CD4-positive, alpha-beta memory T cell (primary cell): ENCODE measurements at regions of chr3 and their contacts with region 1.

Region 1: GRCh38 chr3:32018757-32019564 is 37.4 kb downstream of the ZNF860 start:
- DNase-seq: peak in 4 of 5 donors; percentile 26 to 40 (median 34)
- H3K4me3 ChIP-seq: no peak overlapping the region
- H3K4me3 Mint-ChIP-seq: no peak overlapping the region
- H3K27ac ChIP-seq: no peak overlapping the region
- H3K27ac Mint-ChIP-seq: no peak overlapping the region
- H3K4me1 ChIP-seq: no peaks in the 10 kb centered on the region
- H3K4me1 Mint-ChIP-seq: no peaks in the 10 kb centered on the region
- H3K27me3 ChIP-seq: no peaks in the 10 kb centered on the region
- H3K27me3 Mint-ChIP-seq: no peaks in the 10 kb centered on the region

Region 2: GRCh38 chr3:31105438-31106077 is 913.4 kb before region 1 on chr3:
- CTCF ChIA-PET with region 1: no interaction called
- POLR2A ChIA-PET with region 1: no interaction called
- intact Hi-C with region 1: no loop called
- DNase-seq: no peak
- H3K4me3 ChIP-seq: no peak overlapping the region
- H3K4me3 Mint-ChIP-seq: no peak overlapping the region
- H3K27ac ChIP-seq: no peak overlapping the region
- H3K27ac Mint-ChIP-seq: no peak overlapping the region
- H3K4me1 ChIP-seq: no peaks in the 10 kb centered on the region
- H3K4me1 Mint-ChIP-seq: peaks cover 0 to 9% (median 5%) of the 10 kb centered on the region in 4 donors
- H3K27me3 ChIP-seq: no peaks in the 10 kb centered on the region
- H3K27me3 Mint-ChIP-seq: no peaks in the 10 kb centered on the region

Region 3: DNA sequence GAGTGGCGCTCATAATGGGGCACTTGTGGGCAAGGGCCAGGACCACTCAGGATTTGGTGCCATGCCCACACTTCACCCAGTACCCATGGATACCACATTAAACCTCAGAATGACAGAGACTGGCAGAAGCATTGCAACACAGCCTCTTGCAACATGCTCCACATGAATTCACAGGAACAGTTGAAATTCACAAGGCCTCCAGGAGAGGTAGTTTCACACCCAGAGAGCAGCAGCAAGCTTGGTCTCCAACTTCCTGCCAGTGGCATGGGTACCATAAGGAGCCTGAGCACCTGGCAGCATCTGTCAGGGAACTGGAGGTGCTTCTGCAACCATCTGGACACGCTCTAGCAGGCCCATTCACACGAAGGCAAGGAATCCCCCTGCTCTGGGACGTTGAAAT is 138.9 kb before region 1 on chr3:
- CTCF ChIA-PET with region 1: no interaction called
- POLR2A ChIA-PET with region 1: no interaction called
- intact Hi-C with region 1: no loop called
- DNase-seq: no peak
- H3K4me3 ChIP-seq: no peak overlapping the region
- H3K4me3 Mint-ChIP-seq: no peak overlapping the region
- H3K27ac ChIP-seq: no peak overlapping the region
- H3K27ac Mint-ChIP-seq: no peak overlapping the region
- H3K4me1 ChIP-seq: no peaks in the 10 kb centered on the region
- H3K4me1 Mint-ChIP-seq: peaks cover 0 to 2% (median 0%) of the 10 kb centered on the region in 4 donors
- H3K27me3 ChIP-seq: no peaks in the 10 kb centered on the region
- H3K27me3 Mint-ChIP-seq: peaks cover 0 to 2% of the 10 kb centered on the region in 2 donors

Region 4: GRCh38 chr3:32120471-32120870 is 101.5 kb after region 1 on chr3:
- CTCF ChIA-PET with region 1: interaction called, 13 read pairs
- POLR2A ChIA-PET with region 1: no interaction called
- intact Hi-C with region 1: no loop called
- DNase-seq: no peak
- H3K4me3 ChIP-seq: no peak overlapping the region
- H3K4me3 Mint-ChIP-seq: no peak overlapping the region
- H3K27ac ChIP-seq: no peak overlapping the region
- H3K27ac Mint-ChIP-seq: no peak overlapping the region
- H3K4me1 ChIP-seq: peaks cover 38% of the 10 kb centered on the region
- H3K4me1 Mint-ChIP-seq: peaks cover 34 to 58% (median 43%) of the 10 kb centered on the region in 4 donors
- H3K27me3 ChIP-seq: no peaks in the 10 kb centered on the region
- H3K27me3 Mint-ChIP-seq: no peaks in the 10 kb centered on the region

Region 5: GRCh38 chr3:32132706-32133105 is 113.7 kb after region 1 on chr3:
- CTCF ChIA-PET with region 1: interaction called, 26 read pairs
- POLR2A ChIA-PET with region 1: no interaction called
- intact Hi-C with region 1: no loop called
- DNase-seq: no peak
- H3K4me3 ChIP-seq: no peak overlapping the region
- H3K4me3 Mint-ChIP-seq: no peak overlapping the region
- H3K27ac ChIP-seq: no peak overlapping the region
- H3K27ac Mint-ChIP-seq: no peak overlapping the region
- H3K4me1 ChIP-seq: peaks cover 6% of the 10 kb centered on the region
- H3K4me1 Mint-ChIP-seq: peaks cover 6 to 29% (median 12%) of the 10 kb centered on the region in 4 donors
- H3K27me3 ChIP-seq: no peaks in the 10 kb centered on the region
- H3K27me3 Mint-ChIP-seq: no peaks in the 10 kb centered on the region

Region 6: DNA sequence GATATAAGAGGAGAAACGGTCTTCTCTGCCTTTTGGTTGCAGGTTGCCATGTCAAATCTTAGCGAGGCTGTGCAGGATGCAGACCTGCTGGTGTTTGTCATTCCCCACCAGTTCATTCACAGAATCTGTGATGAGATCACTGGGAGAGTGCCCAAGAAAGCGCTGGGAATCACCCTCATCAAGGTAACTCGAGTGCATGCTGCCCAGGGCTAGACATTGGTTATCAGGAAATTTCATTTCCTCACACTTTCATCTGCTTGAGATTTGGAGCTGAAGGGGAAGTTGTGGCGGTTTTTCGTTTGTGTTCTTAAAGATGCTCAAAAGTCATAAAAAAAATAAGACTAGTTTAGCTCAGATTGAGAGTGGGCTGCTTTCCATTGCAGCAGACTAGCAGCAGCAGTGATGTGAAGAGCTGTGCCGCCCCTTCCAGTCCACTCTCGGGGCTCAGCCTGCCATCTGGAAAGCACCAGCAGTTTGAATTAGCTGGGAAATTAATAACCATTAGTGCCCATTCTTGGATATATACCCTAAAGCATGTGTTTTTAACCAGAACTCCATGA is 119.7 kb after region 1 on chr3:
- CTCF ChIA-PET with region 1: interaction called, 134 read pairs
- POLR2A ChIA-PET with region 1: interaction called, 5 read pairs
- intact Hi-C with region 1: no loop called
- DNase-seq: no peak
- H3K4me3 ChIP-seq: no peak overlapping the region
- H3K4me3 Mint-ChIP-seq: peak overlapping the region in 4 of 8 donors; percentile 22 to 59 (median 46)
- H3K27ac ChIP-seq: no peak overlapping the region
- H3K27ac Mint-ChIP-seq: peak overlapping the region in 4 of 7 donors; percentile 3 to 45 (median 6)
- H3K4me1 ChIP-seq: peaks cover 19% of the 10 kb centered on the region
- H3K4me1 Mint-ChIP-seq: peaks cover 19 to 36% (median 26%) of the 10 kb centered on the region in 4 donors
- H3K27me3 ChIP-seq: no peaks in the 10 kb centered on the region
- H3K27me3 Mint-ChIP-seq: no peaks in the 10 kb centered on the region

Region 7: DNA sequence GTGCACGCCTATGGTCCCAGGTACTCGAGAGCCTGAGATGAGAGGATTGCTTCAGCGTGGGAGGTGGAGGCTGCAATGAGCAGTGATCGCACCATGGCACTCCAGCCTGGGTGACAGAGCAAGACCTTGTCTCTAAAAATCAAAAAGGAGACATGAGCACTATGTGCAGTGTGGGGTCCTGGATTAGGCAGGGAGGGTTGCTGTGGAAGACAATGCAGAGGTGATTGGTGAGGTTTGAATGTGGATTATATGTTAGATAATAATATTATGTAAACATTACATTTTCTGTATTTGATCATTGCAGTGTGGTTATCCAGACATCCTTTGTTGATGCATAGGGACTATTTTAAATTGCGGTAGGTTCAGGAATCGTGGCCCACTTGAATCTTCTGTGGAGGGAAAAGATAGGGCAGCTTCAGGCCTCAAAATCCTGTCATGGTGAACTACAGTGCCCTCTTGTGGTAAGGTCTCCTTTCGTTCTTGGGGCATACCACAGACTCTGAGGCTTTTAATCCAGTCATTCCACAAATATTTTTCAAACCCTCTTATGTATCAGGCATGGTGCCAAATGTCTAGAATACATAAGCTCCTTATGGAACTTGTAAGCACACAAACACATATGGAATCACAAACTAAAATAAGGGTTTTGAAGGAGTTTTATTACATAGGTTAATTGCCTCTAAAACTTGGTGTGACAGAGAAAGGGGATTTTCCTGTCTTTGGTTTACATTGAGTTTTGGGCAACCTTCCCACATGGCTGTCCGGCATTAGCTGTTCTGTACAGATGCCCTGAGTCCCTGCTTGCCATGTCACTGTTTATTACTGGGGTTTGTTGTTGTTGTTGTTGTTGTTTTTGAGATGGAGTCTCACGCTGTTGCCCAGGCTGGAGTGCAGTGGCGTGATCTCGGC is 125.1 kb after region 1 on chr3:
- CTCF ChIA-PET with region 1: interaction called, 134 read pairs
- POLR2A ChIA-PET with region 1: interaction called, 5 read pairs
- intact Hi-C with region 1: loop called (anchors 1 kb)
- DNase-seq: peak; percentile 46 to 58 (median 56)
- H3K4me3 ChIP-seq: no peak overlapping the region
- H3K4me3 Mint-ChIP-seq: no peak overlapping the region
- H3K27ac ChIP-seq: no peak overlapping the region
- H3K27ac Mint-ChIP-seq: peak overlapping the region in 1 of 7 donors; percentile 3
- H3K4me1 ChIP-seq: no peaks in the 10 kb centered on the region
- H3K4me1 Mint-ChIP-seq: peaks cover 1 to 11% (median 4%) of the 10 kb centered on the region in 4 donors
- H3K27me3 ChIP-seq: no peaks in the 10 kb centered on the region
- H3K27me3 Mint-ChIP-seq: no peaks in the 10 kb centered on the region

Region 8: DNA sequence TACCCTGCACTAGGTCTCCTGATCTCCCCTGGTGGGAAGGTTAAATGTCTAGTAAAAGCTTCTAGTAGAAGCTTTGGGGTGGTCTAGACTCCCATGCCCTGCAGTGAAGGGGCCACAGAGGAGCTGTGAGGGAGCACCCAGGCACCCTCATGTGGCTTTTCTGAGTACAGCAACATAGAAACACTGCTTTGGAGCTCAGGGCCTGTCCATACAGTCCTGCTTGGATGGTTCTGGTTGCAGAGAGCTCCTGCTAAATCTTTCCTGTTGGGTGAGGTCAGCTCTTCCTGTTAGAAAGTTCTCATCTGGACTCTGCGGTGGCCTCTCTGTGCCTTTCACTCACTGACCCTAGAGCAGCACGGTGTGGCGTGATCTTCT is 135.2 kb after region 1 on chr3:
- CTCF ChIA-PET with region 1: interaction called, 10 read pairs
- POLR2A ChIA-PET with region 1: no interaction called
- intact Hi-C with region 1: no loop called
- DNase-seq: no peak
- H3K4me3 ChIP-seq: no peak overlapping the region
- H3K4me3 Mint-ChIP-seq: no peak overlapping the region
- H3K27ac ChIP-seq: no peak overlapping the region
- H3K27ac Mint-ChIP-seq: peak overlapping the region in 1 of 7 donors; percentile 67
- H3K4me1 ChIP-seq: no peaks in the 10 kb centered on the region
- H3K4me1 Mint-ChIP-seq: no peaks in the 10 kb centered on the region
- H3K27me3 ChIP-seq: no peaks in the 10 kb centered on the region
- H3K27me3 Mint-ChIP-seq: no peaks in the 10 kb centered on the region

Region 9: GRCh38 chr3:32340039-32340438 is 321.1 kb after region 1 on chr3:
- CTCF ChIA-PET with region 1: interaction called, 3 read pairs
- POLR2A ChIA-PET with region 1: no interaction called
- intact Hi-C with region 1: loop called (anchors 2 kb)
- DNase-seq: peak; percentile 41 to 55 (median 49)
- H3K4me3 ChIP-seq: no peak overlapping the region
- H3K4me3 Mint-ChIP-seq: no peak overlapping the region
- H3K27ac ChIP-seq: no peak overlapping the region
- H3K27ac Mint-ChIP-seq: no peak overlapping the region
- H3K4me1 ChIP-seq: peaks cover 24% of the 10 kb centered on the region
- H3K4me1 Mint-ChIP-seq: peaks cover 21 to 27% (median 24%) of the 10 kb centered on the region in 4 donors
- H3K27me3 ChIP-seq: no peaks in the 10 kb centered on the region
- H3K27me3 Mint-ChIP-seq: no peaks in the 10 kb centered on the region